T-cell (primary cell): ENCODE measurements at regions of chr18 and their contacts with region 1.

Region 1: GRCh38 chr18:35553300-35553699 is 28.2 kb upstream of the GALNT1 start:
- DNase-seq: no peak
- ATAC-seq: no peak
- H3K4me3 ChIP-seq: no peak overlapping the region
- H3K4me3 Mint-ChIP-seq: no peak overlapping the region
- H3K27ac ChIP-seq: no peak overlapping the region
- H3K27ac Mint-ChIP-seq: no peak overlapping the region
- H3K4me1 ChIP-seq: no peaks in the 10 kb centered on the region
- H3K4me1 Mint-ChIP-seq: no peaks in the 10 kb centered on the region
- H3K27me3 ChIP-seq: no peaks in the 10 kb centered on the region
- H3K27me3 Mint-ChIP-seq: peaks cover under 1 to 5% of the 10 kb centered on the region in 2 donors

Region 2: GRCh38 chr18:35478520-35479435 is 74.5 kb before region 1 on chr18:
- CTCF ChIA-PET with region 1: no interaction called
- POLR2A ChIA-PET with region 1: no interaction called
- DNase-seq: peak in 1 of 35 experiments; percentile 7
- ATAC-seq: no peak
- H3K4me3 ChIP-seq: no peak overlapping the region
- H3K4me3 Mint-ChIP-seq: no peak overlapping the region
- H3K27ac ChIP-seq: no peak overlapping the region
- H3K27ac Mint-ChIP-seq: no peak overlapping the region
- H3K4me1 ChIP-seq: no peaks in the 10 kb centered on the region
- H3K4me1 Mint-ChIP-seq: peaks cover 18 to 30% (median 21%) of the 10 kb centered on the region in 3 donors
- H3K27me3 ChIP-seq: no peaks in the 10 kb centered on the region
- H3K27me3 Mint-ChIP-seq: no peaks in the 10 kb centered on the region

Region 3: DNA sequence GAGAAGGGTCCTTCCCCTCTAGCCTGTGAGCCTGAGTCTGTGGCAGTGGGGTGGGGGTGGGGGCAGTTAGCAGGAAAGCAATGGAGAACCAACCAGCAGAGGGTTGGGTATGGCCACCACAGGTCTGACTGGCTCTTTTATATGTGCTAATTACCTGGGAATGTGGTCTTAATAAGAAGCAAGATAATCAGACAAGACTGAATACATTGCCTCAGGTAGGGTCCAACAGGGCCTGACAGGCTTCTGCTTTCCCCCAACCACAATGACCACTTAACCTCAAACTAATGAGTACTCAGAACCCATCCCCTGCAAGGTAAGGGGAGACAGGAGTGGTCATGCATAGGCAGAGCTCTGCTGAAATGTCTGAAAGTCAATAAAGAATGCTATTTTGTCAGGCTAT is 10.9 kb before region 1 on chr18:
- CTCF ChIA-PET with region 1: no interaction called
- POLR2A ChIA-PET with region 1: no interaction called
- DNase-seq: no peak
- ATAC-seq: no peak
- H3K4me3 ChIP-seq: no peak overlapping the region
- H3K4me3 Mint-ChIP-seq: no peak overlapping the region
- H3K27ac ChIP-seq: no peak overlapping the region
- H3K27ac Mint-ChIP-seq: no peak overlapping the region
- H3K4me1 ChIP-seq: no peaks in the 10 kb centered on the region
- H3K4me1 Mint-ChIP-seq: no peaks in the 10 kb centered on the region
- H3K27me3 ChIP-seq: peaks cover 0 to 2% of the 10 kb centered on the region in 2 experiments
- H3K27me3 Mint-ChIP-seq: peaks cover 6 to 12% of the 10 kb centered on the region in 2 donors

Region 4: GRCh38 chr18:35580701-35581539 is 27.6 kb after region 1 on chr18:
- CTCF ChIA-PET with region 1: no interaction called
- POLR2A ChIA-PET with region 1: no interaction called
- DNase-seq: peak; percentile 26 to 75 (median 47)
- ATAC-seq: peak; percentile 76 to 82 (median 76)
- H3K4me3 ChIP-seq: peak overlapping the region; percentile 55 to 58
- H3K4me3 Mint-ChIP-seq: peak overlapping the region; percentile 62 to 74 (median 67)
- H3K27ac ChIP-seq: peak overlapping the region; percentile 52
- H3K27ac Mint-ChIP-seq: no peak overlapping the region
- H3K4me1 ChIP-seq: peaks cover 5 to 18% of the 10 kb centered on the region in 2 experiments
- H3K4me1 Mint-ChIP-seq: peaks cover 29 to 32% (median 31%) of the 10 kb centered on the region in 3 donors
- H3K27me3 ChIP-seq: no peaks in the 10 kb centered on the region
- H3K27me3 Mint-ChIP-seq: peaks cover 3 to 11% of the 10 kb centered on the region in 2 donors

Region 5: GRCh38 chr18:36015629-36016028 is 462.3 kb after region 1 on chr18:
- CTCF ChIA-PET with region 1: no interaction called
- POLR2A ChIA-PET with region 1: interaction called in 1 of 2 experiments, 11 read pairs
- DNase-seq: no peak
- ATAC-seq: no peak
- H3K4me3 ChIP-seq: no peak overlapping the region
- H3K4me3 Mint-ChIP-seq: no peak overlapping the region
- H3K27ac ChIP-seq: no peak overlapping the region
- H3K27ac Mint-ChIP-seq: no peak overlapping the region
- H3K4me1 ChIP-seq: no peaks in the 10 kb centered on the region
- H3K4me1 Mint-ChIP-seq: peaks cover 0 to 4% (median 4%) of the 10 kb centered on the region in 3 donors
- H3K27me3 ChIP-seq: no peaks in the 10 kb centered on the region
- H3K27me3 Mint-ChIP-seq: no peaks in the 10 kb centered on the region